ENCODE measurements at regions of chr11 and their contacts with region 1.

Region 1: DNA sequence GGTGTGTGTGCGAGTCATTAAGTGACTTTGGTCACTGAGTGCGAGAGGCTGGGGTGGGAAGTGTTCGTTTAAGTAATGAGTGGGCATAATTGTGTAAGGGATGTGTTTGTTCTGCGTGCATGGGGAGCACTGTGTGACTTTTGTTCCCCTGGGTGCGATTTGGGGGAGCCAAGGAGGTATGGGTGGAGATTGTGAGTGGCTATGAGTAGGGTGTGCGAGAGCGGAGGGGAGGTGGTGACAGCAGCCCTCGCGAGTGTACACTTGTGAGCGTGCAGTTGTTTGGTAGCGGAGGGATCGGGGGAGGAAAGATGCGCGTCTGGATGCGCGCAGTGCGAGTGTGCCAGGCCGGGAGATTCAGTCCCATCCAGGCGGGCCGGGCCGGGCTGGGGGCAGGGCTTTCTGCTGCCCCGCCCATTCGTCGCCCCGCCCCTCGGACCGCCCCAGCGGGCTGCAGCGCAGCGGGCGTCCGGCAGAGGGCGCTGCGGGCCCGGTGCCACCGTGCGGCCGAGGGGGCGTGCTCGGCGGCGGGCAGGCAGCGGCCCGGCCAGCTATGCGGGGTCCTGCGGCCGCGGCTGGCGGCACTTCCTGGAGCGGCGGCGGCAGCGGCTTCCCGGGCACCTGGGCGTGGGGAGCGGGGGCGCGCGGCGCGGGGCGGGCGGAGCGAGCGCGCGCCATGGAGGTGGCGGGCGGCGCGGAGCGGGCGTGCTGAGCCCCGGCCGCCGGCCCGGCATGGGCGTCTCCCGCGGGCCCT is at the start of gene DGKZ:
- DNase-seq: no peak
- H3K4me3 ChIP-seq: peak within 1 kb of the TSS; percentile 95
- H3K27me3 ChIP-seq: no peaks in the 10 kb centered on the region
- CTCF ChIP-seq: peak; percentile 33
- polyA plus RNA-seq, gene DGKZ: 16.3 and 31.7 TPM in 2 replicates

Region 2: DNA sequence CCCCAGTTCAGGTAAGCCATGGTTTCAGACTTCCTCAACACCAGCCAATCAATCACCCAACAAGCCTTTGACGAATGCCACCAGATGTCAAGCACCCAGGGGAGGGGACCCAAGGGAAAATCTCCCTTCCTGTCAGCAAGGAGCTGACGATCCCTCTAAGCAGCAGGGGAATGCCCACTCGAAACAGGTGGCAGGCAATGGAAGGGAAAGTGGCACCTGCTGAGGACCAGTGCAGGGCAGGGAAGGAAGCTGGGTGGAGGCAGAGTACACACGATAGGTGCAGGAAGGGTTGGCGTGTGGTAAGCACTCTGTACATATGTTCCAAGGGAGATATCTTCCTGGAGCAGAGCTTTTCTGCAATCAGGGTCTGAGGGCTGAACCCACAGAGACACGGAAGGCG is 81.3 kb before region 1 on chr11:
- CTCF ChIA-PET with region 1: no interaction called
- POLR2A ChIA-PET with region 1: no interaction called
- DNase-seq: no peak
- H3K4me3 ChIP-seq: no peak overlapping the region
- H3K27me3 ChIP-seq: no peaks in the 10 kb centered on the region
- CTCF ChIP-seq: no peak

Region 3: GRCh38 chr11:46367244-46367915 is 20.3 kb after region 1 on chr11:
- CTCF ChIA-PET with region 1: interaction called, 162 read pairs
- POLR2A ChIA-PET with region 1: no interaction called
- DNase-seq: no peak
- H3K4me3 ChIP-seq: no peak overlapping the region
- H3K27me3 ChIP-seq: no peaks in the 10 kb centered on the region
- CTCF ChIP-seq: peak; percentile 90

Region 4: DNA sequence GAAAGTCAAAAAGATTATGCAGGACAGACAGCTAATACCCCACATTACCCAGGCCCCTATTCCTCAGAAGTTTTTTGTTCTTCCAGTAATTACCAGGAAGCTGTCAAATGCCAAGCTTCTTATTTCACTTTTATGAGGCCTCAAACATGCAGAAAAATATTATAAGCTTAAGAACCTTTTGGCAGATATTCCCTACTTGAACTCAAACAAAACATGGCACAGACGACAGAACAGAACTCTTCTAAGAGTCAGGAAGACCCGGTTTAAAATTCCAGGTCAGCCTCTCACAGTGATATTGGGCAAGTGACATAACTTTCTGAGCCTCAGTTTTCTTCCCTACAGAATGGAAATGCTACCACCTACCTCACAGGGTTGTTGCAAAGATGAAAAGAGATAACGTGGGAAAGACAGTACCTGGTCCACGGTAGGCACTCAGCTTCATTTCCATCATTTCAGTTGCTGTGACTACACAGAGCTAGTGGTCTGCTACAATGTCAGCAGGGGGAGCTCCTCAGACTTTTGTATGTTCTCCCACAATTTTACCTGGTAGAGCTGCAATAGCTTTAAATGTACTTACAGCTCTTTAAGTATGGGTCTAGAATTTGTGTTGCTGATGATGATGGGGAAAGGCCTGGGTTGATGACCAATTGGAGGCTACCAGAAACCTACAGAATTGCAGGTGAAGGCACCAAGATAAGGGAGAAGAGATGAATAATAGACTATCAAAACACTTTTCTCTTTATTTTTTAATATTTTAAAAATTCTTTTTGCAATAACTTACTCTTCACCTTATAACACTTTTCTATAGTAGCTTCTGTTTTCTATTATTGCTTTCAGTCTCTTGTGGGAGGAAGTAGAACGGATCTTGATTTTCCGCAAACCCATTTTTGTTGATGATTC is 142.8 kb after region 1 on chr11:
- CTCF ChIA-PET with region 1: no interaction called
- POLR2A ChIA-PET with region 1: no interaction called
- DNase-seq: no peak
- H3K4me3 ChIP-seq: no peak overlapping the region
- H3K27me3 ChIP-seq: no peaks in the 10 kb centered on the region
- CTCF ChIP-seq: peak; percentile 67